ENCODE measurements at regions of chr3 and their contacts with region 1.

Region 1: GRCh38 chr3:171788546-171789351 is 21.5 kb downstream of the PLD1 start:
- DNase-seq: no peak
- H3K4me3 ChIP-seq: no peak overlapping the region
- CTCF ChIP-seq: no peak

Region 2: GRCh38 chr3:171654809-171655208 is 133.9 kb before region 1 on chr3:
- in situ Hi-C with region 1: loop called (anchors 10 kb)
- DNase-seq: peak; percentile 63
- H3K4me3 ChIP-seq: no peak overlapping the region
- CTCF ChIP-seq: no peak

Region 3: GRCh38 chr3:171743327-171744157 is 45.2 kb before region 1 on chr3:
- in situ Hi-C with region 1: no loop called
- DNase-seq: no peak
- H3K4me3 ChIP-seq: no peak overlapping the region
- CTCF ChIP-seq: no peak

Region 4: GRCh38 chr3:172236771-172237742 is 448.3 kb after region 1 on chr3:
- in situ Hi-C with region 1: no loop called
- DNase-seq: no peak
- H3K4me3 ChIP-seq: no peak overlapping the region
- CTCF ChIP-seq: no peak

Measured in astrocyte of the cerebellum (primary cell).